ENCODE measurements at regions of chr5 and their contacts with region 1.

Region 1: GRCh38 chr5:31186672-31187267 is 6.7 kb upstream of the CDH6 start:
- DNase-seq: peak; percentile 24
- H3K4me3 ChIP-seq: no peak overlapping the region
- H3K27ac ChIP-seq: no peak overlapping the region
- H3K27me3 ChIP-seq: no peaks in the 10 kb centered on the region
- CTCF ChIP-seq: peak; percentile 79

Region 2: GRCh38 chr5:30804739-30805505 is 381.8 kb before region 1 on chr5:
- CTCF ChIA-PET with region 1: interaction called, 11 read pairs
- POLR2A ChIA-PET with region 1: no interaction called
- DNase-seq: peak; percentile 11
- H3K4me3 ChIP-seq: no peak overlapping the region
- H3K27ac ChIP-seq: no peak overlapping the region
- H3K27me3 ChIP-seq: no peaks in the 10 kb centered on the region
- CTCF ChIP-seq: peak; percentile 57

Region 3: DNA sequence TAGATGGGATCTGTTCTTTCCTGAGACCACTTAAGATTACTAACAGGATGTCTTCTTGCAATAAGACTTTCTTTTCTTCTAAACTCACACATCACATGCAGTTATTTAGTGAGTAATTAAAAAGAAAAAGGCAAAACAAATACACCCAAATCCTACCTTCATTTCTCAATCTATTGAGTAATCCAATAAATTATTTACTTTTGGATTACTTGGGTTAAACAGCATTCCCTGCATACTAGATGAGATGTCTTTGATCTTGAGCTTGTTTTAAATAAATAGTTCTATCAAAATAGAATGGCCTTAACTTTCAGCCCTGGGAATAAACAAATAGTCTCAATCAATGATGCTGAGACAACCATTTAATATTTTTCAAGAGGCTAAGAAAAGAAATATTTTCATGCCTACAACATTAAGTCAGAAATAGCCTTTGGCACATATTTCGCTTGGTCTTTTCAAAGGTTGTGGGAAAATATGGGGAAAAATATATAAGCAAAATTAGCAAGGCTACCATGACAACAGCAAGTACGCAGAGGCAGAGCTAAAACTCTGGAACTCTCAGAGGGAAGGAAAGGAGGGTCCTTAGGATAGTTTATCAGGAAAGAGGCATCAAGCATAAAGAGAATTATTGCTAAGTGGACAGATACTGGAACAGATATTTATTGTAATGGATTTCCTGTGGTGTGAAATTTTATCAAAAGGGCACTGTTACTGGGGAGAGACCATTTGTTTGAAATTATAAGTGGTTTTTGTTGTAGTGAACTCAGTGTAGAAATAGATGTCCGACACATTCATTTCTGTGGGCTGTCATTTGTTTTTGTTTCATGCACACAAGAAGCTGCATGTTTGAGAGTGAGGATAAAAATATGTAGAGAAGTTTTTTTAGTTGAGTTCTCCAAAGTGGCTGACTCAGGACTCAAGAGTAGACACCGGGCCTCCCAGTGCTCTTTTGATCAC is 63.5 kb before region 1 on chr5:
- CTCF ChIA-PET with region 1: interaction called, 11 read pairs
- POLR2A ChIA-PET with region 1: no interaction called
- DNase-seq: peak; percentile 30
- H3K4me3 ChIP-seq: no peak overlapping the region
- H3K27ac ChIP-seq: no peak overlapping the region
- H3K27me3 ChIP-seq: no peaks in the 10 kb centered on the region
- CTCF ChIP-seq: no peak

Region 4: GRCh38 chr5:31161781-31162181 is 25.0 kb before region 1 on chr5:
- CTCF ChIA-PET with region 1: interaction called, 10 read pairs
- POLR2A ChIA-PET with region 1: no interaction called
- DNase-seq: no peak
- H3K4me3 ChIP-seq: no peak overlapping the region
- H3K27ac ChIP-seq: no peak overlapping the region
- H3K27me3 ChIP-seq: no peaks in the 10 kb centered on the region
- CTCF ChIP-seq: no peak

Measured in AG04450 (cell line).